Heart left ventricle (tissue), 16 donors: ENCODE measurements at regions of chr17 and their contacts with region 1.

Region 1: DNA sequence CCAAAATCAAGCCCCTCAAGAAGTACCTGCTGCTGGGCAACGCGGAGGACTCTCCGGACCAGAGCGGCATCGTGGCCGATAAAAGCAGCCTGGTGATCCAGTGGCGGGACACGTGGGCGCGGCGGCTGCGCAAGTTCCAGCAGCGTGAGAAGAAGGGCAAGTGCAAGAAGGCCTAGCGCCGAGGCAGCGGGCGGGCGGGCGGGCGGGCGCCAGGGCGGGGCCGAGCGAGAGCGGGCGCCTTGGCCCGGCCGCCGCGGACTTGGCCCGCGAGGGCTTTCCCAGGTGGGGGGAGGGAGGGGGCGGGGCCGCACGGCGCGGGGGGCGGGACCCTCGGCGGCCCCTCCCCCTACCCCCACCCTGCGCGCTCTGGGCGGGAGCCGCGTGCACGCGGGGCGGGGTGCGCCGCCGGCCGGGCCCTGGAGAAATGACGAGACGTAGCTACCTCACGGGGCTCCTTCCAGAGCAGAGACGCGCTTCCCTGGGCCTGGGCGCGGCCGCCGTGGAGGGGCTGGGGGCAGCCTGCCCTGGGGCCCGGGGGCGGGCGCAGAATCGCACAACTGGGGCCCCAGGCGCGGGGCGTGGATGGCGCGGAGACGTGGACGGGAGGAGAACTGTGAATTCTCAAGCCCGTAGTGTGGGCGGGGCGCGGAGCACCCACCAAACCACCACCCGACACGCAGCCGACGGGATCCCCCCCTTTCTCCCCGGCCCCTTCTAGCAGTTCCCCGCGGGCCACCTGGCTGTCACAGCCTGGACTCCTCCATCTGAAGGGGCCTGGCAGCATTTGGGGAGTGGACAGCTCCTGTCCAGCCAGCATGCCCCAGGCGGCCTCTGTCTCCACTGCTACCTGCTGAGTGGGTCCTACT is 218.7 kb downstream of the NTN1 start:
- DNase-seq: peak; percentile 82 to 87 (median 85)
- ATAC-seq: peak; percentile 29 to 84 (median 64)
- H3K4me3 ChIP-seq: peak overlapping the region; percentile 19 to 81 (median 65)
- H3K27ac ChIP-seq: peak overlapping the region; percentile 91 to 100 (median 96)
- H3K4me1 ChIP-seq: peaks cover 10 to 46% (median 33%) of the 10 kb centered on the region in 12 donors
- H3K27me3 ChIP-seq: no peaks in the 10 kb centered on the region
- CTCF ChIP-seq: peak in 1 of 12 donors; percentile 12
- POLR2A ChIP-seq: peak in 1 of 2 donors; percentile 63

Region 2: GRCh38 chr17:9021158-9021991 is 218.7 kb before region 1 on chr17 and contains the start of gene NTN1:
- intact Hi-C with region 1: loop called in 1 of 10 experiments (anchors 2 kb)
- DNase-seq: peak; percentile 54 to 70 (median 56)
- ATAC-seq: peak in 3 of 4 donors; percentile 81 to 85 (median 84)
- H3K4me3 ChIP-seq: peak within 1 kb of the TSS; percentile 49 to 88 (median 70)
- H3K27ac ChIP-seq: peak within 1 kb of the TSS; percentile 13 to 86 (median 76)
- H3K4me1 ChIP-seq: peaks cover 0 to 46% (median 22%) of the 10 kb centered on the region in 12 donors
- H3K27me3 ChIP-seq: peaks cover 0 to 79% (median 29%) of the 10 kb centered on the region in 9 donors
- CTCF ChIP-seq: no peak
- POLR2A ChIP-seq: no peak
- total RNA-seq, gene NTN1: 9.3 to 25.8 (median 19.2) TPM